B cell (primary cell): ENCODE measurements at regions of chr7 and their contacts with region 1.

Region 1: DNA sequence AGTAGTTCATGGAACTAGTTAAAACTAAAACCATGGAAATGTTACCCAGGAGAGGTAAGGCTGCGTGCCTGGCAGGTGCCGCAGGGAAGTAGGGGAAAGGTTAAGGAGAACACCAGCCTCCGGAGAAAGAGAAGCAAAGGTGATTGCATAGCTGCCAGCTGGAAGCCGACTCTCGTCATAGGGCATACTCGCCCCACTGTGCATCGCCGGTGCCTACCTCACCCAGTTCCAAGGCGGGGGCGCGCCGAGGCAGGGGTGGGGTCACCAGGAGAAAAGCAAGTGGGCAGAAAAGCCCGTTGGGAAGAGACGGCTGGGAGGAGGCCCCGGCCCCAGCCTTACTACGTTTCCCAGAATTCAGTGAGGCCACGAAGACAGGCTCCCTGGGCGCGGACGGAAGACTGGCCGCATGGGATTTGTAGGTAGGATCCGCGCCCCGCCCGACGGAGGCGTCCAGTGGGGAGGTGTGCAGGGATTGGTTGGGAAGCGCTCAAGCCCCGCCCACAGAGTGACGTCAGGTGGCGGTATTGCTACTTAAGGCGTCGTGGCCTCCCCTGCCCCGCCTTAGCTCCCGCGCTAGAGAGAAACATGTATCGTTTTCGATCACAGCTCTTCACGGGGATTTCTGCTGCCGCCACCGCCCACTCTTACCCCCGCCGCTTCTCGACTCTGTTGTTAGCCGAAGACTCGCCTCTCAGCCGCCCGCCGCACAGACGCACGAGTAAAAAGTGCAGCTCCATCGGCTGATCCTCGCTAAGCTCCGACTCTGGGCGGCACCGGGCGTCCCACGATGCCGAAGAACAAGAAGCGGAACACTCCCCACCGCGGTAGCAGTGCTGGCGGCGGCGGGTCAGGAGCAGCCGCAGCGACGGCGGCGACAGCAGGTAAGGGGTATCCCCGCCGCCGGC is at the start of gene IFRD1:
- DNase-seq: peak; percentile 99
- ATAC-seq: peak; percentile 84
- H3K4me3 ChIP-seq: peak within 1 kb of the TSS; percentile 80 to 100 (median 95)
- H3K4me3 Mint-ChIP-seq: peak within 1 kb of the TSS; percentile 95
- H3K27ac ChIP-seq: peak within 1 kb of the TSS; percentile 98 to 99
- H3K27ac Mint-ChIP-seq: peak within 1 kb of the TSS; percentile 98
- H3K4me1 ChIP-seq: peaks cover 16 to 19% of the 10 kb centered on the region in 2 donors
- H3K4me1 Mint-ChIP-seq: peaks cover 38% of the 10 kb centered on the region
- H3K27me3 ChIP-seq: no peaks in the 10 kb centered on the region
- H3K27me3 Mint-ChIP-seq: no peaks in the 10 kb centered on the region
- CTCF ChIP-seq: no peak
- total RNA-seq, gene IFRD1: 101 and 106 TPM in 2 replicates

Region 2: GRCh38 chr7:111827863-111828504 is 622.2 kb before region 1 on chr7:
- CTCF ChIA-PET with region 1: no interaction called
- POLR2A ChIA-PET with region 1: no interaction called
- intact Hi-C with region 1: no loop called
- DNase-seq: no peak
- ATAC-seq: no peak
- H3K4me3 ChIP-seq: no peak overlapping the region
- H3K4me3 Mint-ChIP-seq: no peak overlapping the region
- H3K27ac ChIP-seq: no peak overlapping the region
- H3K27ac Mint-ChIP-seq: no peak overlapping the region
- H3K4me1 ChIP-seq: no peaks in the 10 kb centered on the region
- H3K4me1 Mint-ChIP-seq: no peaks in the 10 kb centered on the region
- H3K27me3 ChIP-seq: no peaks in the 10 kb centered on the region
- H3K27me3 Mint-ChIP-seq: peaks cover 2% of the 10 kb centered on the region
- CTCF ChIP-seq: no peak

Region 3: DNA sequence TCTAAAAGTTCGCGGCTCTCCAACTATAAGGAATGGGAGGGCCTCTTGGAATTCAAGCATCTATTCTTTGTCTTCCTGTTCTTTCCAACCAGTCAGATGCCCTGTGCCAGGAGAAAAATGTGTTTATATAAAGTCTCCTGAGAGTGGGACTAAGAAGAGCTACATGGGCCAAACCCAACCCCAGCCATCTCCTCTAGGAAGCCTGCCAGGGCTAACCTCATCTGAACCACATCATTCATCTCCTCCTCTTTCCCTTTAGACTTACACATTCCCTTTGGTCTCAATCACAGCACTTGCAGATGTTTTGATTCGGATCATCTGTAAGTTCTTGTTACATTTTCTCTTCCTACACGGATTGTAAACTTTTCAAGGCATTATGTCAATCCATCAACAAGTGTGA is 306.6 kb before region 1 on chr7:
- CTCF ChIA-PET with region 1: no interaction called
- POLR2A ChIA-PET with region 1: no interaction called
- intact Hi-C with region 1: no loop called
- DNase-seq: no peak
- ATAC-seq: no peak
- H3K4me3 ChIP-seq: no peak overlapping the region
- H3K4me3 Mint-ChIP-seq: no peak overlapping the region
- H3K27ac ChIP-seq: no peak overlapping the region
- H3K27ac Mint-ChIP-seq: no peak overlapping the region
- H3K4me1 ChIP-seq: no peaks in the 10 kb centered on the region
- H3K4me1 Mint-ChIP-seq: no peaks in the 10 kb centered on the region
- H3K27me3 ChIP-seq: peaks cover 0 to 2% (median 0%) of the 10 kb centered on the region in 4 experiments
- H3K27me3 Mint-ChIP-seq: peaks cover 4% of the 10 kb centered on the region
- CTCF ChIP-seq: no peak

Region 4: DNA sequence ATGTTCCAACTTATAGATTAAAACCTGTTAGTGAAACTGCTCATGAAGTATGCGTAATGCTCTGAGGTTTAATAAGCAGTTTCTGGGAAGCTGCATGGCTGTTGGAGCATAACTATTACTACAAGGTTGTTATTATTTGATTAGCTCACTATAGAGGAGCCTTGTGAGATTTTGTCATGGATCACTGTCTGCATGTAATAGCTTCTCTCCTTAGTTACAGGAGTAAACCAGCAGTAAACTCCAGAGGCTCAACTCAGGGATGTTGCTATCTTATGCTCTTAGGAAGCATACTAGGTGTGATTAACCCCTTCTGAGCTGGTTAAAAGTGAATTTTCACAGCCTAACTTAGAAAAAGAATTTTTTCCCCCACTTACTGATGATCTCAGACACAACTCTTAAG is 63.5 kb before region 1 on chr7:
- CTCF ChIA-PET with region 1: no interaction called
- POLR2A ChIA-PET with region 1: no interaction called
- intact Hi-C with region 1: loop called (anchors 1 kb)
- DNase-seq: no peak
- ATAC-seq: no peak
- H3K4me3 ChIP-seq: no peak overlapping the region
- H3K4me3 Mint-ChIP-seq: no peak overlapping the region
- H3K27ac ChIP-seq: no peak overlapping the region
- H3K27ac Mint-ChIP-seq: no peak overlapping the region
- H3K4me1 ChIP-seq: no peaks in the 10 kb centered on the region
- H3K4me1 Mint-ChIP-seq: peaks cover 2% of the 10 kb centered on the region
- H3K27me3 ChIP-seq: peaks cover 0 to 5% (median 1%) of the 10 kb centered on the region in 4 experiments
- H3K27me3 Mint-ChIP-seq: peaks cover 10% of the 10 kb centered on the region
- CTCF ChIP-seq: no peak

Region 5: GRCh38 chr7:112789817-112790585 is 339.8 kb after region 1 on chr7 and contains the start of gene TMEM168:
- CTCF ChIA-PET with region 1: no interaction called
- POLR2A ChIA-PET with region 1: interaction called, 6 read pairs
- intact Hi-C with region 1: loop called (anchors 1 kb)
- DNase-seq: peak; percentile 92
- ATAC-seq: peak; percentile 83
- H3K4me3 ChIP-seq: peak within 1 kb of the TSS; percentile 83 to 96 (median 90)
- H3K4me3 Mint-ChIP-seq: peak within 1 kb of the TSS; percentile 92
- H3K27ac ChIP-seq: peak within 1 kb of the TSS; percentile 91 to 93
- H3K27ac Mint-ChIP-seq: peak within 1 kb of the TSS; percentile 92
- H3K4me1 ChIP-seq: peaks cover 16 to 23% of the 10 kb centered on the region in 2 donors
- H3K4me1 Mint-ChIP-seq: peaks cover 43% of the 10 kb centered on the region
- H3K27me3 ChIP-seq: no peaks in the 10 kb centered on the region
- H3K27me3 Mint-ChIP-seq: no peaks in the 10 kb centered on the region
- CTCF ChIP-seq: no peak
- total RNA-seq, gene TMEM168: 30.0 and 31.8 TPM in 2 replicates